ENCODE measurements at regions of chr17 and their contacts with region 1.

Region 1: DNA sequence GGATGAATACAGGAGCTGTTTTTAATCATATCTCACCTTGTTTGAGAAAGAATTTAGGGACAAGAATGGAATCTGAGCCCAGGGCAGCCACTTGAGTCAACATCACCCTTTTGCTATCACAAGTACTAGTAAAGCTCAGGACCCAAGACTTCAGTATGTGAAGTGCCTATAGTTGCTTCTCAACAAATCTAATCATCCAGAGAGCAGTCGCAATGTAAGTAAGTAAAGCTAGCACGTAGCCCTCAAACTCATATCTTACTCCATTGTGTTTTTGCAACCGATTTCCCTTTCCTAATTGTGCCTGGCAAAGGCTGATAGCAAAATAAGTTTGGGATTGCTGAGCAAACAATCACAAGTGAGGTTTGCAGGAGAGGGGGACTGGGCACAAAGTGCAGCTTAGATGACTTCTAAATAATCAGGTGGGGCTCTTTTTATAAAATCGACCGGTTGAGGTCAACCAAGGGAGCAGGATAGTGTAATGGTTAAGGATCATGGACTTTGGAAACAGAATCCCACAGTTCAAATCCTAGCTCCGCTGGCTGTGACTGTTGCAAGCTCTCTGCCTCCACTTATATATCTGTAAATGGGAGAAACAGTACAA is 13.0 kb downstream of the TOB1 start:
- DNase-seq: peak; percentile 36 to 39
- H3K4me3 ChIP-seq: no peak overlapping the region
- H3K4me3 Mint-ChIP-seq: peak overlapping the region; percentile 64
- H3K27ac Mint-ChIP-seq: peak overlapping the region; percentile 74
- H3K4me1 ChIP-seq: peaks cover 25% of the 10 kb centered on the region
- H3K4me1 Mint-ChIP-seq: peaks cover 30% of the 10 kb centered on the region
- H3K27me3 ChIP-seq: no peaks in the 10 kb centered on the region
- H3K27me3 Mint-ChIP-seq: no peaks in the 10 kb centered on the region
- CTCF ChIP-seq: no peak

Region 2: GRCh38 chr17:50468409-50469207 is 384.5 kb before region 1 on chr17 and contains the start of gene CHAD:
- CTCF ChIA-PET with region 1: no interaction called
- POLR2A ChIA-PET with region 1: no interaction called
- intact Hi-C with region 1: no loop called
- DNase-seq: peak in 1 of 2 experiments; percentile 55
- H3K4me3 ChIP-seq: no peak within 1 kb of the TSS
- H3K4me3 Mint-ChIP-seq: no peak within 1 kb of the TSS
- H3K27ac Mint-ChIP-seq: no peak within 1 kb of the TSS
- H3K4me1 ChIP-seq: no peaks in the 10 kb centered on the region
- H3K4me1 Mint-ChIP-seq: no peaks in the 10 kb centered on the region
- H3K27me3 ChIP-seq: no peaks in the 10 kb centered on the region
- H3K27me3 Mint-ChIP-seq: no peaks in the 10 kb centered on the region
- CTCF ChIP-seq: no peak
- total RNA-seq, gene CHAD: not detected in 2 replicates

Region 3: GRCh38 chr17:50765454-50766221 is 87.5 kb before region 1 on chr17:
- CTCF ChIA-PET with region 1: interaction called, 11 read pairs
- POLR2A ChIA-PET with region 1: no interaction called
- intact Hi-C with region 1: no loop called
- DNase-seq: peak in 1 of 2 experiments; percentile 47
- H3K4me3 ChIP-seq: no peak overlapping the region; the same call in 1 of the 2 replicates
- H3K4me3 Mint-ChIP-seq: peak overlapping the region; percentile 25
- H3K27ac Mint-ChIP-seq: peak overlapping the region; percentile 81
- H3K4me1 ChIP-seq: peaks cover 67% of the 10 kb centered on the region
- H3K4me1 Mint-ChIP-seq: peaks cover 55% of the 10 kb centered on the region
- H3K27me3 ChIP-seq: no peaks in the 10 kb centered on the region
- H3K27me3 Mint-ChIP-seq: no peaks in the 10 kb centered on the region
- CTCF ChIP-seq: no peak

Region 4: DNA sequence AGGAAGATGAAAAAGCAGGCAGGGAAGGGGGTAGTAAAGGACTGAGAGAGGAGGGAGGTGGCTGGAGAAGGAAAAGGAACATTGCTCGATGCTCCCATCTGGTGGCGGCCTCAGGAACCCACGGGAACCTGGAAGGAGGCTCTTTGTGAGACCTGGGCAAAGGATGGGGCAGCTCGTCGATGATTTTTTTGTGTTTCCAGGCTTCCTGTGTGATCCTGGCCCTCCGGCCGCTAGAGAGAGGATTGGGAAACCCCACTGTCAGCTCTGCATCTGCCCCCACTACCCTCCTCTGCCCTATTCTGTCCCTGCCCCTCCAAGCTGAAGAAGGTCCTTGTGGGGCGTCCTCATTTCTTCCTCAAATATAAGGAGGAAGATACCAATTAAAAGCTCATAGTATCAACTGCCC is 11.2 kb before region 1 on chr17:
- CTCF ChIA-PET with region 1: interaction called, 23 read pairs
- POLR2A ChIA-PET with region 1: no interaction called
- intact Hi-C with region 1: no loop called
- DNase-seq: peak; percentile 89 to 94
- H3K4me3 ChIP-seq: no peak overlapping the region
- H3K4me3 Mint-ChIP-seq: no peak overlapping the region
- H3K27ac Mint-ChIP-seq: no peak overlapping the region
- H3K4me1 ChIP-seq: peaks cover 23% of the 10 kb centered on the region
- H3K4me1 Mint-ChIP-seq: peaks cover 10% of the 10 kb centered on the region
- H3K27me3 ChIP-seq: no peaks in the 10 kb centered on the region
- H3K27me3 Mint-ChIP-seq: no peaks in the 10 kb centered on the region
- CTCF ChIP-seq: peak; percentile 98 to 99

Region 5: GRCh38 chr17:50893183-50893993 is 40.3 kb after region 1 on chr17:
- CTCF ChIA-PET with region 1: interaction called, 10 read pairs
- POLR2A ChIA-PET with region 1: no interaction called
- intact Hi-C with region 1: no loop called
- DNase-seq: peak; percentile 56 to 70
- H3K4me3 ChIP-seq: no peak overlapping the region
- H3K4me3 Mint-ChIP-seq: peak overlapping the region; percentile 1
- H3K27ac Mint-ChIP-seq: peak overlapping the region; percentile 72
- H3K4me1 ChIP-seq: peaks cover 58% of the 10 kb centered on the region
- H3K4me1 Mint-ChIP-seq: peaks cover 68% of the 10 kb centered on the region
- H3K27me3 ChIP-seq: no peaks in the 10 kb centered on the region
- H3K27me3 Mint-ChIP-seq: no peaks in the 10 kb centered on the region
- CTCF ChIP-seq: no peak

Region 6: GRCh38 chr17:50931144-50931908 is 78.2 kb after region 1 on chr17:
- CTCF ChIA-PET with region 1: interaction called, 26 read pairs
- POLR2A ChIA-PET with region 1: interaction called, 3 read pairs
- intact Hi-C with region 1: no loop called
- DNase-seq: peak; percentile 92
- H3K4me3 ChIP-seq: peak overlapping the region; percentile 44
- H3K4me3 Mint-ChIP-seq: peak overlapping the region; percentile 78
- H3K27ac Mint-ChIP-seq: peak overlapping the region; percentile 89
- H3K4me1 ChIP-seq: peaks cover 28% of the 10 kb centered on the region
- H3K4me1 Mint-ChIP-seq: peaks cover 29% of the 10 kb centered on the region
- H3K27me3 ChIP-seq: no peaks in the 10 kb centered on the region
- H3K27me3 Mint-ChIP-seq: no peaks in the 10 kb centered on the region
- CTCF ChIP-seq: no peak

Region 7: DNA sequence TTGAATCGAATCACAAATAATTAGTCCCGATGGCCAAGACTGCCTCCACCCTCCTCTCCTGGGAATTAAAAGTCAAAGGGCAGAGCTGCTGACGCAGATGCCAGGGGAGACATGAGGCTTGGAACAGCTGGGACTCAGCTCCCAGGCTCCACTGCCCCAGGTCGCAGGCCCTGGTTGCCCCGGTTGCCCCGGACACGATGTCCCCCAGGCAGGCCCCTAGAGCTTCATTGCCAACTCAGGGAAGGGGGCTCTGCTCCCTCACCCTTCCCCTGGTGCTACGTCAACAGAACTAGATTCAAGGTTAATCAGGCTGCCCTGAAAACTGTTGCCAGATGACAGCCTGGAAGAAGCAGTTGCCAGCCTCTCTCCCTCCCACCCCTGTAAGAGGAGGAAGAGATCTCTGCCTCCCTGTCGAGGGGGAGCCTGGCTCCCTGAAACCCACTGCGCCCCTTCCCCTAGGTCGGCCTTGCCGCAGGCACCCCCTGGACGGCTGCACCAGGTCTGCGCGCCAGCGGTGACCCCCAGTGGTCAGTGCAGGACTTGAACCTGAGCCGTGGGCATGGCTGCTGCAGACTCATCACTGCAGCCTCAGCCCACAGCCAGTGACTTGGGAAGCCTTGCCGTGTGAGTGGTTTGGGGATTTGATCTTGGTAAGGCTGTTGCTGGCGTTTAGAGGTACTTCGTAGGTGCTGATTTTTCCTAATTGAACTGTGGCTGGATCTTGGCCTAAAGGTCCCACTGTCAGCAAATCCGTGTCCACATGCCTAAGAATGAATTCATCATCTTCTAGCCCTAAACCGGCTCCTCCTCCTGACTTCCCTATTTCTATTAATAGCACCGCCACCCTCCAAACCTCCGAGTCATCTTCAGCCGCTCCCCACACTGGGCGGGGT is 97.1 kb after region 1 on chr17:
- CTCF ChIA-PET with region 1: interaction called, 186 read pairs
- POLR2A ChIA-PET with region 1: interaction called, 14 read pairs
- intact Hi-C with region 1: loop called (anchors 1 kb)
- DNase-seq: peak; percentile 90 to 93
- H3K4me3 ChIP-seq: no peak overlapping the region
- H3K4me3 Mint-ChIP-seq: peak overlapping the region; percentile 32
- H3K27ac Mint-ChIP-seq: peak overlapping the region; percentile 16
- H3K4me1 ChIP-seq: peaks cover 29% of the 10 kb centered on the region
- H3K4me1 Mint-ChIP-seq: peaks cover 31% of the 10 kb centered on the region
- H3K27me3 ChIP-seq: no peaks in the 10 kb centered on the region
- H3K27me3 Mint-ChIP-seq: no peaks in the 10 kb centered on the region
- CTCF ChIP-seq: peak; percentile 99

Region 8: GRCh38 chr17:50976951-50977472 is 123.9 kb after region 1 on chr17:
- CTCF ChIA-PET with region 1: interaction called, 13 read pairs
- POLR2A ChIA-PET with region 1: no interaction called
- intact Hi-C with region 1: no loop called
- DNase-seq: no peak
- H3K4me3 ChIP-seq: no peak overlapping the region
- H3K4me3 Mint-ChIP-seq: no peak overlapping the region
- H3K27ac Mint-ChIP-seq: no peak overlapping the region
- H3K4me1 ChIP-seq: peaks cover 17% of the 10 kb centered on the region
- H3K4me1 Mint-ChIP-seq: peaks cover 24% of the 10 kb centered on the region
- H3K27me3 ChIP-seq: no peaks in the 10 kb centered on the region
- H3K27me3 Mint-ChIP-seq: no peaks in the 10 kb centered on the region
- CTCF ChIP-seq: no peak

Region 9: GRCh38 chr17:50986989-50987660 is 134.0 kb after region 1 on chr17:
- CTCF ChIA-PET with region 1: no interaction called
- POLR2A ChIA-PET with region 1: no interaction called
- intact Hi-C with region 1: no loop called
- DNase-seq: no peak
- H3K4me3 ChIP-seq: no peak overlapping the region
- H3K4me3 Mint-ChIP-seq: no peak overlapping the region
- H3K27ac Mint-ChIP-seq: no peak overlapping the region
- H3K4me1 ChIP-seq: no peaks in the 10 kb centered on the region
- H3K4me1 Mint-ChIP-seq: no peaks in the 10 kb centered on the region
- H3K27me3 ChIP-seq: no peaks in the 10 kb centered on the region
- H3K27me3 Mint-ChIP-seq: no peaks in the 10 kb centered on the region
- CTCF ChIP-seq: no peak

Region 10: DNA sequence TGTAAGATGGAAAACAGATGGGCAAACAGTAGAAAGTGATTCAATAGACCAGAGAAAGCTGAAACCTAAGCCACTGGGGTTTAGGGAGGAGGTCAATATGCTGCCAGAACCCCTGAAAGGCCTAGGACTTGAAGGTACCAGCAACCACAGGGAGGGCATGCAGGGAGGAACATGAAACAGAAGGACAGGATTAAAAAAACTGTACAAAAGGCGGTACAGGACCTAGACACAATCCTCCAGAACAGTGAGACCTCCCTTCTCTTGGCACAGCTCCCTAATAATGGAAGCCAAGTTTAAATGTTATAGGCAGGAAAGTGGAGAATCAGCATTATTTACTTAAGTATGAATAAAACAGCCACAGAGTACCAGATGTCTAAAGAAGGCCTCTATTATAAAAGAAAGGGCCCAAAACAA is 162.0 kb after region 1 on chr17:
- CTCF ChIA-PET with region 1: no interaction called
- POLR2A ChIA-PET with region 1: no interaction called
- intact Hi-C with region 1: no loop called
- DNase-seq: no peak
- H3K4me3 ChIP-seq: no peak overlapping the region
- H3K4me3 Mint-ChIP-seq: no peak overlapping the region
- H3K27ac Mint-ChIP-seq: no peak overlapping the region
- H3K4me1 ChIP-seq: no peaks in the 10 kb centered on the region
- H3K4me1 Mint-ChIP-seq: peaks cover 7% of the 10 kb centered on the region
- H3K27me3 ChIP-seq: no peaks in the 10 kb centered on the region
- H3K27me3 Mint-ChIP-seq: no peaks in the 10 kb centered on the region
- CTCF ChIP-seq: no peak

Measured in Caco-2 (cell line).